Calu3 (cell line): ENCODE measurements at regions of chr2 and their contacts with region 1.

Region 1: GRCh38 chr2:238831177-238831576 is 16.7 kb upstream of the TWIST2 start:
- DNase-seq: no peak
- H3K4me3 Mint-ChIP-seq: no peak overlapping the region
- H3K27ac Mint-ChIP-seq: no peak overlapping the region
- H3K4me1 Mint-ChIP-seq: no peaks in the 10 kb centered on the region
- H3K27me3 Mint-ChIP-seq: peaks cover 74% of the 10 kb centered on the region
- CTCF ChIP-seq: no peak

Region 2: DNA sequence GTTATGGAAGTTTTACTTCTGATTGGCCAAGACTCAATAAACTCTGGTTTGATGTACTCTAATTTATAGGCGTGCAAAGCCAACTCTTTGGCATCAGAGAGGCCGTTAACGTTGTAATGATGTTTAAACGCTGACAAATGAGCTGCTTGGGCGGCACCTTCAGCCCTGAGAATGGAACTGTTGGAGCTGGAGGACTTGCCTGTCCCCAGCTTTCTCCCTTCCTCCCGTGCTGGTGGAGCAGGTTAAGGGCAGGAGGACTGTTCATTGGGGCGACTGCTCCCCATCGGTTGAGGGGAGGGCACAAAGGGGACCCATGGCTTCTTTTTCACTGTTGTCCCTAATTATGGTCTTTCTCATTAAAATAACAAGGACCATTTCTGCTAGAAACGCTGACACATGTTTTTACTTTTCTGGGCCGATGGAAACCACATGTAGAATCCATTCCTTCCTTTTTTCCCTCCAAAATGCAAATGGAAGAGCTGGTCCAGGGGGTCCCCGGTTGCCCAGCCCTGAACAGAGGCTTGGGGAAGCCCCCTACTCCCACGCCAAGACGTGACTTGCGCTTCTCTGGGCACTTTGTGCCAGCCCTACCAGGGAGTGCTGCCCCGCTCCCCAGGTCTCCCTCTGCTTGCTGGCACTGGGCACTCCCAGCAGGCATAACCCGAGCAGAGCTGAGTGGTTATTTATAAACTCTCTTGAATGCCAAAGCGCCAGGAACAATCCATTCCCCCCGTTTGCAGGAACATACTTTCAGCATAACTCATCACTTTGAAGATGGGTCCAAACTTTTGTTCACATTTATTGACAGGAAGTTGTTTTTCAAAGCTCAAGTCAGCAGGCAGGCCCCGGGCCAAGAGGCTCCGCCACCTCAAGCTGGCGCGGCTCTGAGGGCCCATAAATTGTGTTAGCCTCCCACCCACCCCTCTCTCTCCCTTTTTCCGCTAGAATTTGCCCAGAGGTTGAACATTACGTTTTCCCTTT is 234.3 kb before region 1 on chr2:
- CTCF ChIA-PET with region 1: no interaction called
- intact Hi-C with region 1: no loop called
- DNase-seq: peak; percentile 43
- H3K4me3 Mint-ChIP-seq: no peak overlapping the region
- H3K27ac Mint-ChIP-seq: no peak overlapping the region
- H3K4me1 Mint-ChIP-seq: peaks cover 18% of the 10 kb centered on the region
- H3K27me3 Mint-ChIP-seq: no peaks in the 10 kb centered on the region
- CTCF ChIP-seq: no peak

Region 3: DNA sequence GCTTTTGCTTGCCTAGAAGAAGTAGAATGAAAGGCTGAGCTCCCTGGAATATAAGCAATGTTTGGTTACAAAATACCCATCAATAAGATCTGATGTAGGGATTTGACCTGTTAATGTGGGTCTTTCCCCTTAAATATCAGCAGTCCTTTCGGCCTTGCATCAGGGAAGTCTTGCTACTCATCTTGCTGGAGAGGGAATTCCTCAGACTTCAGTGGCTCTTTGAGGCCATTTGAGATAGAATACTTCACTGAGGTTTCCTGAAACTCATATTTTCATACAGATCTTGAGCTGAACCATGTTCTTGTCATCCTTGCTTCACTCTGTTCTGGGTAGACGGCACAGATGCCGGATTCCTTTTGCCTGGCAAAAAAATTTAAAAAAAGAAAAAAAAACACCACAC is 20.6 kb after region 1 on chr2:
- CTCF ChIA-PET with region 1: no interaction called
- intact Hi-C with region 1: loop called (anchors 2 kb)
- DNase-seq: no peak
- H3K4me3 Mint-ChIP-seq: no peak overlapping the region
- H3K27ac Mint-ChIP-seq: no peak overlapping the region
- H3K4me1 Mint-ChIP-seq: no peaks in the 10 kb centered on the region
- H3K27me3 Mint-ChIP-seq: peaks cover 51% of the 10 kb centered on the region
- CTCF ChIP-seq: no peak

Region 4: GRCh38 chr2:239075918-239076758 is 245.0 kb after region 1 on chr2:
- CTCF ChIA-PET with region 1: no interaction called
- intact Hi-C with region 1: no loop called
- DNase-seq: no peak
- H3K4me3 Mint-ChIP-seq: no peak overlapping the region
- H3K27ac Mint-ChIP-seq: no peak overlapping the region
- H3K4me1 Mint-ChIP-seq: no peaks in the 10 kb centered on the region
- H3K27me3 Mint-ChIP-seq: no peaks in the 10 kb centered on the region
- CTCF ChIP-seq: no peak